Natural killer cell (primary cell): ENCODE measurements at regions of chr20 and their contacts with region 1.

Region 1: DNA sequence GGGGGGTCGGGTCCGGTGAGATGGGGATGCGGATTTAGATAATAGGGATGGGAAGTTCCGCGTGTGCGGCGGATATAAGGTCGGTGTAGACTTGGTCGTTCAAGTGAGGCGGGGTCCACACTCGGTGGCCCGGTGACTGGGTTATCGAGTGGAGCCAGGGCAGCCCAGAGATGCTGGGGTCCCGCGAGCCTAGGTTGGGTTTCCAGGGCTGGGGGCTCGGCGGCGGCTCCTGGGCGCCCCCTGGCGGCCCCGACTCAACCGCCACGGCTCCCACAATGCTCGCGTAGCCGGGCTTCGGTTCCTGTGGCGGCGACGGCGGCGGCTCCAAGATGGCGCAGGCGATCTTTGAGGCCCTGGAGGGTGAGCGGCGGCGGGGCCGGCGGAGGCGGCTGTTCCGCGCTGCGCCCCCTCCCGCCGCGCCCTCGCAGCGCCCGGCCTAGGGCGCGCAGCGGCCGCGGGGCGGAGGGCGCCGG is at the start of gene ZNF341:
- DNase-seq: peak; percentile 87 to 93
- ATAC-seq: peak; percentile 87 to 94 (median 88)
- H3K4me3 ChIP-seq: peak within 1 kb of the TSS; percentile 65
- H3K4me3 Mint-ChIP-seq: peak within 1 kb of the TSS; percentile 90
- H3K27ac ChIP-seq: peak within 1 kb of the TSS; percentile 73
- H3K27ac Mint-ChIP-seq: peak within 1 kb of the TSS; percentile 89 to 98
- H3K4me1 ChIP-seq: peaks cover 27% of the 10 kb centered on the region
- H3K4me1 Mint-ChIP-seq: peaks cover 16 to 25% of the 10 kb centered on the region in 2 donors
- H3K27me3 ChIP-seq: no peaks in the 10 kb centered on the region
- H3K27me3 Mint-ChIP-seq: no peaks in the 10 kb centered on the region
- CTCF ChIP-seq: peak; percentile 65
- total RNA-seq, gene ZNF341: 3.6 to 5.1 (median 4.3) TPM

Region 2: DNA sequence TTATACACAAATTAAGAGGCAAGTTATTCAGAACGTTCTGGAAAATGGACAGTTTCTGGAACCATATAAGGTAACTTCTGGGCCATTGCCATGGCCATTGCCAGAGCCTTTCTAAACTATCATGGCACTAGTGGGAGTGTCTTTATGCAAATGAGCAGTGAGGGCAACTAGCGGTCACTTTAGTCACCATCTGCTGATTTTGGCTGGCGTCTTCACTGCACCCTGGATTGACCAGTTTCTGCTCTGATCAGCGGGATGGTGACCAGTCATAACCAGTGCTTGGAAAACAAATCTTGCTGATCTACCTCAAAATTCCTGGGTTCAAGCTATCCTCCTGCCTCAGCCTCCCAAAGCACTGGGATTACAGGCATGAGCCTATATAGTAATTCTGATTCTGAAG is 280.9 kb before region 1 on chr20:
- intact Hi-C with region 1: loop called (anchors 2 kb)
- DNase-seq: no peak
- ATAC-seq: no peak
- H3K4me3 ChIP-seq: no peak overlapping the region
- H3K4me3 Mint-ChIP-seq: no peak overlapping the region
- H3K27ac ChIP-seq: no peak overlapping the region
- H3K27ac Mint-ChIP-seq: no peak overlapping the region
- H3K4me1 ChIP-seq: no peaks in the 10 kb centered on the region
- H3K4me1 Mint-ChIP-seq: no peaks in the 10 kb centered on the region
- H3K27me3 ChIP-seq: no peaks in the 10 kb centered on the region
- H3K27me3 Mint-ChIP-seq: no peaks in the 10 kb centered on the region
- CTCF ChIP-seq: no peak